Endothelial cell of umbilical vein (primary cell): ENCODE measurements at regions of chr22 and their contacts with region 1.

Region 1: GRCh38 chr22:49670456-49671330 is 157.0 kb downstream of the BRD1 start:
- DNase-seq: no peak
- H3K4me3 ChIP-seq: peak overlapping the region in 2 of 3 experiments; percentile 23 to 39
- H3K27ac ChIP-seq: no peak overlapping the region
- H3K4me1 ChIP-seq: peaks cover 15% of the 10 kb centered on the region
- H3K27me3 ChIP-seq: peaks cover 15 to 20% of the 10 kb centered on the region in 2 experiments
- CTCF ChIP-seq: no peak
- POLR2A ChIP-seq: no peak

Region 2: DNA sequence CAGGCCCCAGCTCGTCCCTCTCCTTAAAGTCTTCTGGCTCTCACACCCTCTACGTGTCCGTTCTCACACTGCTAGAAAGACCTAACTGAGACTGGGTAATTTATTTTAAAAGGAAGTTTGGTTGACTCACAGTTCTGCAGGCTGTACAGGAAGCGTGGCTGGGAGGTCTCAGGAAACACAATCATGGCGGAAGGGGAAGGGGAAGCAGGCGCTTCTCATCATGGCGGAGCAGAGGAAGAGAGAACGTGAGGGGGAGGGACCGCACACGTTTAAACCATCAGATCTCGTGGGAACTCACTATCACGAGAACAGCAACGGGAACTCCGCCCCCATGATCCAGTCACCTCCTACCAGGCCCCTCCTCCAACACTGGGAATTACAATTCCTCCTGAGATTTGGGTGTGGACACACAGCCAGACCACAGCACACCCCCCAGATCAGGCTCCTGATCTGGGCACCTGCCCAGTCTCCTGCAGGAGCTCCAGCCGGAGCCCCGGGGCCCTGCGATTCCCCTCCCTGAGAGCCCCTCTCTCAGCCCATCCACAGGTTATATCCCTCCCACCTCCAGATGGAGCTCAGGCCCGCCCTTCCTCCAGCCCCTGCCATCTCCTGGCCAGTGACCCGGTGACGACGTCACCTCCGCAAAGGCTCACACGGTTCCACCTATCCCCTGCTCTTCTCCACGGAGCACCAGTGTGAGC is 13.3 kb before region 1 on chr22:
- CTCF ChIA-PET with region 1: interaction called, 10 read pairs
- POLR2A ChIA-PET with region 1: interaction called, 7 read pairs
- dilution Hi-C with region 1: no loop called
- intact Hi-C with region 1: loop called (anchors 1 kb)
- DNase-seq: peak; percentile 96
- H3K4me3 ChIP-seq: peak overlapping the region; percentile 49 to 60 (median 51)
- H3K27ac ChIP-seq: peak overlapping the region; percentile 72
- H3K4me1 ChIP-seq: peaks cover 30% of the 10 kb centered on the region
- H3K27me3 ChIP-seq: no peaks in the 10 kb centered on the region
- CTCF ChIP-seq: no peak
- POLR2A ChIP-seq: peak; percentile 72

Region 3: GRCh38 chr22:49701380-49702067 is 30.8 kb after region 1 on chr22:
- CTCF ChIA-PET with region 1: interaction called, 7 read pairs
- POLR2A ChIA-PET with region 1: no interaction called
- dilution Hi-C with region 1: no loop called
- intact Hi-C with region 1: loop called (anchors 2 kb)
- DNase-seq: no peak
- H3K4me3 ChIP-seq: no peak overlapping the region
- H3K27ac ChIP-seq: no peak overlapping the region
- H3K4me1 ChIP-seq: no peaks in the 10 kb centered on the region
- H3K27me3 ChIP-seq: no peaks in the 10 kb centered on the region
- CTCF ChIP-seq: peak in 1 of 2 donors; percentile 43
- POLR2A ChIP-seq: no peak